ENCODE measurements at regions of chr20 and their contacts with region 1.

Region 1: GRCh38 chr20:37527638-37528441 is at the start of gene BLCAP:
- DNase-seq: peak; percentile 88
- H3K4me3 Mint-ChIP-seq: peak within 1 kb of the TSS; percentile 89
- H3K27ac Mint-ChIP-seq: peak within 1 kb of the TSS; percentile 99
- H3K4me1 Mint-ChIP-seq: peaks cover 43% of the 10 kb centered on the region
- H3K27me3 Mint-ChIP-seq: peaks cover 5% of the 10 kb centered on the region
- total RNA-seq, gene BLCAP: 24.2 and 26.3 TPM in 2 replicates

Region 2: GRCh38 chr20:37336369-37337207 is 191.3 kb before region 1 on chr20:
- intact Hi-C with region 1: loop called (anchors 5 kb)
- DNase-seq: peak; percentile 19
- H3K4me3 Mint-ChIP-seq: peak overlapping the region; percentile 14
- H3K27ac Mint-ChIP-seq: peak overlapping the region; percentile 28
- H3K4me1 Mint-ChIP-seq: peaks cover 17% of the 10 kb centered on the region
- H3K27me3 Mint-ChIP-seq: no peaks in the 10 kb centered on the region

Measured in activated T-helper 2 cell treated with anti-CD3 and anti-CD28 coated beads, Interferon-gamma antibody, Interleukin-2, Interleukin-4, amounts not matched to agents 10 μg/mL and 5 μg/mL and 100 μg/mL, durations not matched to agents 14 hours and 24 hours and 36 hours (primary cell).